ENCODE measurements at regions of chr10 and their contacts with region 1.

Region 1: DNA sequence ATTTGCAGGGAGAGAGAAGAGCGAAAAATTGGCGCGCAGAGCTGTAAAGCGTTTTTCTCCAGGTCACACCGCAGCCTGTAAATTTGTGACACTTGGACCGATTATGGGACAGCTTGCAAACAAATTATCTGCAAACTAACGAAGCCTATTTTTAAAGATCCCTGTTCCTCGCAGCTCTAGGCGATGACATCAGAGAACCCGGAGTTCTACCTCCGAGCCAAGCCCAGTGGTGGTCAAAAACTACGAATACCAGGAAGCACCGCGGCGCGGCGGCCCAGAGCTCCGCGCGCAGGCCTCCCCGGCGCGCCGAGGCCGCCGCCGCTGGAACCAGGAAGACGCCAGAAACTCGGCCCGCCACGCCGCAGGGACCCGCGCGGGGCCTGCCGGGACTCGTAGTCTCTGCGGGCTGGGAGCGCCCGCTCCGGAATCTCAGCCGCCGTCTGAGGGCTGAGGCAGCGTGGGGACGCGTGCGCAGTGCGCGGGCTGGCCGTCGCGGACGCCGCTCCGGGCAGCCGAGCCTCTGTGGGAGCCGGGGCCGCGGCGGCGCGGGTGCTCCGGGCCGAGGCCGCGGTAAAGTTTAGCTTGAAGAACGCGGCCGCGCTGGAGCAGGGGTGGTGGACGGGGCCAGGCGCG is at the start of gene PLEKHA1:
- DNase-seq: peak; percentile 91 to 93 (median 92)
- ATAC-seq: peak; percentile 93
- H3K4me3 ChIP-seq: peak within 1 kb of the TSS; percentile 90
- H3K4me3 Mint-ChIP-seq: peak within 1 kb of the TSS; percentile 91 to 99 (median 96)
- H3K27ac ChIP-seq: peak within 1 kb of the TSS; percentile 98
- H3K27ac Mint-ChIP-seq: peak within 1 kb of the TSS; percentile 81 to 98 (median 93)
- H3K4me1 ChIP-seq: peaks cover 6 to 23% of the 10 kb centered on the region in 2 donors
- H3K4me1 Mint-ChIP-seq: peaks cover 21 to 51% (median 37%) of the 10 kb centered on the region in 7 donors
- H3K27me3 ChIP-seq: no peaks in the 10 kb centered on the region
- H3K27me3 Mint-ChIP-seq: peaks cover 0 to 71% (median 5%) of the 10 kb centered on the region in 5 donors
- total RNA-seq, gene PLEKHA1: 5.9 to 90.1 (median 39.2) TPM

Region 2: DNA sequence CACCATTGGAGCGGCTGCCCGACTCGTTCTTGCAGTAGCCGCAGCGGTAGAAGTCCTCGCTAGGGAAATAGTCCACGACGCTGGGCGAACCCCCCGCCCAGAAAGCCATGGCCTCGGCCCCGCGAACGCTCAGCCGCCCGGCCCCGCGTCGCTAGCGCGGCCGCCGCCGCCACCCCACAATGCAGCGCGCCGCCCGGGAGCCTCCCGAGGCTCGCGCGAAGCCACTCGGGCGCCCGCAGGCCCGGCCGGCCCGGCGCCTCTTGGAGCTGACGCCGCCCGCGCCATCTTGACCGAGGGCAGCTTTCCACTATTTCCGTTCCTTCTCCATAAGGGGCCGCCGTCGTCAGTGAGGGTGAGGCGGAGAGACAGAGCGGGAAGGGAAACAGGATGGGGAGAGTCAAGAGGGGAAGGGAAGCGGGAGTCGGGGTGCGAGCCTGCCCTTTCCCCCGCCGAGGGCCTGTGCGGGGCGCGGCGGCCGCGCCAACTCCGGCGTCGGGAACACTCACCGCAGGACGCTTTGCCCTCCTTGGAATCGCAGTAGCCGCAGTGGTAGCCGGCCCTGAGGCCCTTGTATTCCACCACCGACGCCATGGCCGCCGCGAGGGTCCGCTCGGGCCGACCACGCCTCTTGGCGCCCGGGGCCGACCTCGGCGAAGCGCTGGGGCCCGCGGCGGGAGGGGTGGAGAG is 446.4 kb before region 1 on chr10 and contains the start of gene ATE1:
- CTCF ChIA-PET with region 1: no interaction called
- POLR2A ChIA-PET with region 1: no interaction called
- intact Hi-C with region 1: loop called (anchors 2 kb)
- DNase-seq: peak; percentile 74 to 86 (median 80)
- ATAC-seq: peak; percentile 98
- H3K4me3 ChIP-seq: peak within 1 kb of the TSS; percentile 65
- H3K4me3 Mint-ChIP-seq: peak within 1 kb of the TSS; percentile 88 to 96 (median 92)
- H3K27ac ChIP-seq: peak within 1 kb of the TSS; percentile 96
- H3K27ac Mint-ChIP-seq: peak within 1 kb of the TSS; percentile 79 to 98 (median 94)
- H3K4me1 ChIP-seq: peaks cover 0 to 13% of the 10 kb centered on the region in 2 donors
- H3K4me1 Mint-ChIP-seq: peaks cover 15 to 48% (median 39%) of the 10 kb centered on the region in 7 donors
- H3K27me3 ChIP-seq: no peaks in the 10 kb centered on the region
- H3K27me3 Mint-ChIP-seq: no peaks in the 10 kb centered on the region
- total RNA-seq, gene ATE1: 23.0 to 26.6 (median 26.2) TPM

Region 3: GRCh38 chr10:122342293-122343134 is 31.8 kb before region 1 on chr10:
- CTCF ChIA-PET with region 1: interaction called, 3 read pairs
- POLR2A ChIA-PET with region 1: interaction called, 3 read pairs
- intact Hi-C with region 1: loop called in 1 of 2 experiments (anchors 1 kb)
- DNase-seq: peak in 8 of 9 donors; percentile 33 to 78 (median 66)
- ATAC-seq: peak; percentile 80
- H3K4me3 ChIP-seq: no peak overlapping the region
- H3K4me3 Mint-ChIP-seq: peak overlapping the region in 1 of 10 donors; percentile 57
- H3K27ac ChIP-seq: no peak overlapping the region
- H3K27ac Mint-ChIP-seq: peak overlapping the region in 4 of 9 donors; percentile 12 to 75 (median 42)
- H3K4me1 ChIP-seq: no peaks in the 10 kb centered on the region
- H3K4me1 Mint-ChIP-seq: peaks cover 0 to 8% (median 6%) of the 10 kb centered on the region in 7 donors
- H3K27me3 ChIP-seq: no peaks in the 10 kb centered on the region
- H3K27me3 Mint-ChIP-seq: peaks cover 0 to 7% (median 0%) of the 10 kb centered on the region in 5 donors

Region 4: DNA sequence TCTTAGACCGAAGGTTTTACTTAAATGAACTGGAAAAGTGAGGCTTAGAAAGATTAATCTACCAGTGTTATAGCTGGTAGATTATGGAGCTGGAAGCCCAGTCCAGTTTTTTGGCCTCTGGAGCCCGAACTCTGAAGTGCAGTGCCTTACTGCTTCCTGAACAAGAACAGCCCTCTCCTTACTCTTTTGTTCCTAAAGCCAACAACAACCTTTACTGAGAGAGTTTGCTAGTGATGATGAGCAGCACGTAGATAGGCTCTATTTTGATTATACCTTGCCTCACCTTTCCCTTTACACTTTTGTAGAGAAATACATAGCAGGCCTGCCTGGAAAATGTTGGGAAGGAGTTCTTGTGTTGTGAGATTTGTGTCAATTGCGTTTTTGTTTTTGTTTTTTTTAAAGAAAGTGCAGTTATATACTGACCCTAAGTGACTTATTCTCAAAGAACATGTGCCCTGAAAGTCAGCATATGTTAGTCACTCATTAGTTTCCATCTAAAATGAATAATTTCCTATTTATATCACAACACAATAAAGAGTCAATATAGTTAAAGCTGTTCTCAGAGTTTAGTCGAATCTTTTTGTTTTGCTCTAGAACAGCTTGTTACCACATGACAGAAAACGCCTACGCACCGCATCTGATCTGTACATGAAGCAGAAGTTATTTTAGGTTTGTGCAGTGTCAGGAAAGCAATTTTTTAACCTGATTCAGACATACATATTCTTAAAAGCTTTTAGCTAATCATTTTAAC is 33.2 kb after region 1 on chr10:
- CTCF ChIA-PET with region 1: interaction called, 4 read pairs
- POLR2A ChIA-PET with region 1: interaction called, 12 read pairs
- intact Hi-C with region 1: loop called in 1 of 2 experiments (anchors 1 kb)
- DNase-seq: peak in 7 of 9 donors; percentile 53 to 78 (median 65)
- ATAC-seq: peak; percentile 76
- H3K4me3 ChIP-seq: no peak overlapping the region
- H3K4me3 Mint-ChIP-seq: peak overlapping the region in 9 of 10 donors; percentile 13 to 75 (median 53)
- H3K27ac ChIP-seq: peak overlapping the region; percentile 54
- H3K27ac Mint-ChIP-seq: peak overlapping the region in 6 of 9 donors; percentile 81 to 95 (median 88)
- H3K4me1 ChIP-seq: peaks cover 0 to 52% of the 10 kb centered on the region in 2 donors
- H3K4me1 Mint-ChIP-seq: peaks cover 18 to 61% (median 54%) of the 10 kb centered on the region in 7 donors
- H3K27me3 ChIP-seq: no peaks in the 10 kb centered on the region
- H3K27me3 Mint-ChIP-seq: peaks cover 0 to 7% (median 0%) of the 10 kb centered on the region in 5 donors

Region 5: GRCh38 chr10:122419876-122420623 is 45.7 kb after region 1 on chr10:
- CTCF ChIA-PET with region 1: interaction called, 3 read pairs
- POLR2A ChIA-PET with region 1: interaction called, 31 read pairs
- intact Hi-C with region 1: loop called (anchors 1 to 2 kb)
- DNase-seq: peak in 1 of 9 donors; percentile 8
- ATAC-seq: no peak
- H3K4me3 ChIP-seq: no peak overlapping the region
- H3K4me3 Mint-ChIP-seq: peak overlapping the region in 7 of 10 donors; percentile 25 to 74 (median 38)
- H3K27ac ChIP-seq: peak overlapping the region; percentile 54
- H3K27ac Mint-ChIP-seq: peak overlapping the region in 8 of 9 donors; percentile 56 to 94 (median 84)
- H3K4me1 ChIP-seq: peaks cover 67 to 75% of the 10 kb centered on the region in 2 donors
- H3K4me1 Mint-ChIP-seq: peaks cover 40 to 95% (median 83%) of the 10 kb centered on the region in 7 donors
- H3K27me3 ChIP-seq: no peaks in the 10 kb centered on the region
- H3K27me3 Mint-ChIP-seq: peaks cover 0 to 2% (median 0%) of the 10 kb centered on the region in 5 donors

Region 6: GRCh38 chr10:122879339-122880273 is 505.3 kb after region 1 on chr10 and contains the start of gene FAM24B:
- CTCF ChIA-PET with region 1: no interaction called
- POLR2A ChIA-PET with region 1: no interaction called
- intact Hi-C with region 1: loop called (anchors 1 kb)
- DNase-seq: peak; percentile 84 to 96 (median 94)
- ATAC-seq: peak; percentile 93
- H3K4me3 ChIP-seq: peak within 1 kb of the TSS; percentile 81
- H3K4me3 Mint-ChIP-seq: peak within 1 kb of the TSS; percentile 86 to 99 (median 92)
- H3K27ac ChIP-seq: peak within 1 kb of the TSS; percentile 77
- H3K27ac Mint-ChIP-seq: peak within 1 kb of the TSS; percentile 85 to 96 (median 92)
- H3K4me1 ChIP-seq: peaks cover 18 to 21% of the 10 kb centered on the region in 2 donors
- H3K4me1 Mint-ChIP-seq: peaks cover 31 to 65% (median 54%) of the 10 kb centered on the region in 7 donors
- H3K27me3 ChIP-seq: no peaks in the 10 kb centered on the region
- H3K27me3 Mint-ChIP-seq: no peaks in the 10 kb centered on the region
- total RNA-seq, gene FAM24B: 9.9 to 13.5 (median 11.4) TPM

Measured in naive thymus-derived CD4-positive, alpha-beta T cell (primary cell).